ENCODE measurements at regions of chr10 and their contacts with region 1.

Region 1: DNA sequence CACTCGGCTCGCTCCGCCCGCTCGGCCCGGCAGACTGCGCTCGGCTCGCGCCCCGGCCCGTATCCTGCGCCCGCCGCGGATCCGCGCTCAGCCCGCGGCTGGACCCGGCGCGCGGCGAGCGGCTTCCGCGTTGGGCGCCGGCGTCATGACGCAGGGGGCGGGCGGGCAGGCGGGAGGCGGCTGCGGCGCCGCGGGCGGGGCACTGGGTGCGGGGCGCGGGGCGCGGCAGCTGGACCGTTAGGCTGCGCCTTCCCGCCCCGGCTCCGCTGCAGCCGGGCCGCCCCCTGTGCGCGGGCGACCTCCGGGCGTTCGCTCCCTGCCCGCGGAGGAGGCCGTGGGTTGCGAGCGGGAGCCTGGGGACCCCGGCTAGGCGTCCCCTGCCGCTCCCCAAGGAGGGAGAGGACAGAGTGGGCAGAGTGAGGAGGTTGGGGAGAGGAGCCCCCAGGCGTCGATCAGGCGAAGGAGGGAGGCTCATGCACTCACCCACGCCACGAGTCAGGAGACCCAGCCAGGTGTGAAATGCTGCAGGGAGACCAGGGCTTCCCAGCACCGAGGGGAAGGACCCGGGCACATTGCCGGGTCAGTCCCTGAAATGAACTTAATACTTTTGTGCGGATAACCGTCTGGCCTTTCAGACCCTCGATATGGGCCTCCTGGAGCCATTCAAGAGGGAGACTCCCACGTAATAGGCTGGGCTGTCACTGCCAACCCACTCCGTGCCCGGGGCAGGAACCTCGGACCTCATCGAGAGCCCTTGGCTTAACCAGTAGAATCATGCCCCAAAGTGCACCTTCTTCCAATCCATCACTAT is at the start of gene PIP4K2A:
- DNase-seq: peak in 1 of 2 donors; percentile 86
- H3K4me3 ChIP-seq: peak within 1 kb of the TSS; percentile 89 to 96
- H3K27ac ChIP-seq: peak within 1 kb of the TSS; percentile 90 to 92
- H3K4me1 ChIP-seq: peaks cover 0 to 14% of the 10 kb centered on the region in 2 donors
- H3K27me3 ChIP-seq: no peaks in the 10 kb centered on the region
- CTCF ChIP-seq: no peak
- total RNA-seq, gene PIP4K2A: 34.9 TPM

Region 2: DNA sequence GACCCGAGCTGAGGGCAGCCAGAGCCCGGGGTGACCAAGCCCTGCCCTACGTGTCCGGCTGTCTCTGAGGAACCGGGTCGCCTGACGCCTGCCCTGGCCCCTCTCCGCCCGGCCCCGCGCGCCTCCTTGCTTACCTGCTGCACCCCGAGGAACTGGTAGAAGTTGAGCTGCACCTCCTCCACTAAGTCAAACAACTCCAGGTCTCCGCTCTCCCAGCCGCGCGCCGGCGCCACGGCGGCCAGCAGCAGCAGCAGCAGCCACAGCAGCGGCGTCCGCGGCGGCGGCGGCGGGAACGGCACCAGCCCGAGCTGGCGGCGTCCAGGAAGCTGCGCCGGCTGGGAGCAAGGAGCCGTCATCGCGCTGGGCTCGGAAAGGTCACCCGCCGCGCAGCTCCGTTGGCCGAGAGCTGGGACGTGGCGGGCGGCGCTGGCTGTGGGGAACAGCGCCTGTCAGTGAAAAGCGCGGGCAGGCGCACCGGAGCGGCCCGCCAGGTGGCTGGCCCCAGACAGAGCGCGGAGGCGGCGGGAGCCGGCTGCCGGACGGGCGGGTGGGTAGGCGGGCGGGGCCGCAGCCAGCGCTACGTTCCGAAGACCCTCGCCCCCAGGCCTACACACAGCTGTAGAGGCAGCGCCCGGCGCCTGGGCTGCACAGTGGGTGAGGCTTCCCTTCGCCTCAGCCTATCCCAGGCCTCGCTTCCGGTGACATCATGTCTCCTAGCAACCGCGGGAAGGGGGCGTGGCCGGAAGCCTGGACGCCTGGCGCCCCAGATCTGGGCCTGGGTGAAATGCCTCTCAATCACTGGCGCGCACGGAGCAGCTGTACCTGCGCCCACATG is 711.4 kb before region 1 on chr10 and contains the start of gene DNAJC1:
- intact Hi-C with region 1: loop called (anchors 5 kb)
- DNase-seq: peak; percentile 93 to 99
- H3K4me3 ChIP-seq: peak within 1 kb of the TSS; percentile 74 to 81
- H3K27ac ChIP-seq: peak within 1 kb of the TSS; percentile 96
- H3K4me1 ChIP-seq: peaks cover 0 to 6% of the 10 kb centered on the region in 2 donors
- H3K27me3 ChIP-seq: no peaks in the 10 kb centered on the region
- CTCF ChIP-seq: peak in 2 of 3 experiments; percentile 13 to 15
- total RNA-seq, gene DNAJC1: 26.1 TPM

Region 3: GRCh38 chr10:22163019-22163418 is 551.7 kb before region 1 on chr10:
- intact Hi-C with region 1: no loop called
- DNase-seq: no peak
- H3K4me3 ChIP-seq: no peak overlapping the region
- H3K27ac ChIP-seq: no peak overlapping the region
- H3K4me1 ChIP-seq: no peaks in the 10 kb centered on the region
- H3K27me3 ChIP-seq: no peaks in the 10 kb centered on the region
- CTCF ChIP-seq: no peak

Region 4: DNA sequence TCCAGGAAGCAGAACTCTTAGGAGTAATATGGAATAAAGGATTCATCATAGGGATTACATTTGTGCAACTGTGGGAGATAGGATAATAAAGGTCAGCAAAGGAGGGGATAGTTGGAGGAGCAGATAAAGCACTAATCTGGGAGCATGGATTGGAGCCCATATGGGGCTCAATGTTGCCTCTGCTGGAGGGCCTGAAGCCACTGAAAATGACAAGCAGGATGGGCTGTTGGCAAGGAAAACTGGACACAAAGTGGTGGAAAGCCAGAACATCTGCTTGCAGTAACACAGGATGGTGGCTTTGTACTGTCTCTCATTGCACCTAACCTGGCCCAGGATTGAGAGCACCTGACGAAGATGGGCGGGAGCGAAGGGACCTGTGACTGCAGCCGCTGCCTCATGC is 413.5 kb before region 1 on chr10:
- intact Hi-C with region 1: no loop called
- DNase-seq: no peak
- H3K4me3 ChIP-seq: no peak overlapping the region
- H3K27ac ChIP-seq: no peak overlapping the region
- H3K4me1 ChIP-seq: no peaks in the 10 kb centered on the region
- H3K27me3 ChIP-seq: no peaks in the 10 kb centered on the region
- CTCF ChIP-seq: no peak

Region 5: DNA sequence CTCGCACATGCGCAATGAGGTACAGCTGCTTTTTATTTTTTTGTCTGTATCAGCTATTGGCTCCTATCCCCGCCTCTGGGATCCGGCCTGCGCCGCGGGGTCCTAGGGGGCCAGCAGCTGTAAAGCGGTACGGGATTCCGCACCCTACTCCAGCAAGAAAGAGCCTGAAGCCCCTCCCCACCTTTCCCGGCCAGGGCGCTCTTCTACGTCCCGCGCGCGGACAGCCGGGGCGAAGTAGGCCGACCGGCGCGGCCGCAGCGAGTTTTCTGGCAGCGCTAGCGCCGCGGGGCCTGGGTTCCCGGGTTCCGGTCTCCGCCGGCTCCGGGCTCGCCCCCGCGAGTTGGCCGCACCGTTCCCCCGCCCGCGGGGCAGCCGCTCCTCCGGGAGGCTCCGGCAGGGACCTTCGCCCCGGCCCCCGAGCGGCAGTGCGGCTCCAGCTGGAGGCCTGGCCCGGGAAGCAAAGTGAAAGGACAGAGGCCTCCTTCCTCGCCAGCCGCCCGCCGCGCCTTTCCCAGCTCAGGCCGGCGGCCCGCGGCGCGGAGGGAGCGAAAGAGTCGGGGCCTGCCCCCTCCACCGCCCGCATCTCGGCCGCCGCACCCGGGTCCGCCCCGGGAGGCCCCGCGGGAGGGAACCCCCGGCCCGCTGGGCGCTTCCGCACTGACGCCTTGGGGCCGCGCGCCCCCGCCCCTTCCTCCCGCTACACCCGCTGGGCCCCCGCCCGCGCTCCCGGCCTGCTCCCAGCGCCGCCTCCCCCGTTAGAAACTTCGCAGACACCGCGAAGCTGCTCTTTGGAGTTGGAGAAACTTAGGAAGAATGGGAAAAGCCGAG is 374.1 kb before region 1 on chr10:
- intact Hi-C with region 1: loop called (anchors 5 kb)
- DNase-seq: peak in 1 of 2 donors; percentile 84
- H3K4me3 ChIP-seq: peak overlapping the region; percentile 85 to 99
- H3K27ac ChIP-seq: peak overlapping the region; percentile 94 to 99
- H3K4me1 ChIP-seq: peaks cover 3 to 21% of the 10 kb centered on the region in 2 donors
- H3K27me3 ChIP-seq: peaks cover 62% of the 10 kb centered on the region
- CTCF ChIP-seq: no peak

Region 6: GRCh38 chr10:22620140-22620857 is 94.4 kb before region 1 on chr10:
- intact Hi-C with region 1: loop called (anchors 2 kb)
- DNase-seq: peak in 1 of 2 donors; percentile 92
- H3K4me3 ChIP-seq: no peak overlapping the region
- H3K27ac ChIP-seq: peak overlapping the region; percentile 47 to 64
- H3K4me1 ChIP-seq: peaks cover 5 to 43% of the 10 kb centered on the region in 2 donors
- H3K27me3 ChIP-seq: no peaks in the 10 kb centered on the region
- CTCF ChIP-seq: no peak

Region 7: GRCh38 chr10:22849077-22849805 is 134.6 kb after region 1 on chr10:
- intact Hi-C with region 1: loop called (anchors 2 kb)
- DNase-seq: peak; percentile 70 to 93
- H3K4me3 ChIP-seq: peak overlapping the region; percentile 25 to 38
- H3K27ac ChIP-seq: peak overlapping the region; percentile 87 to 96
- H3K4me1 ChIP-seq: peaks cover 3 to 34% of the 10 kb centered on the region in 2 donors
- H3K27me3 ChIP-seq: no peaks in the 10 kb centered on the region
- CTCF ChIP-seq: no peak

Region 8: DNA sequence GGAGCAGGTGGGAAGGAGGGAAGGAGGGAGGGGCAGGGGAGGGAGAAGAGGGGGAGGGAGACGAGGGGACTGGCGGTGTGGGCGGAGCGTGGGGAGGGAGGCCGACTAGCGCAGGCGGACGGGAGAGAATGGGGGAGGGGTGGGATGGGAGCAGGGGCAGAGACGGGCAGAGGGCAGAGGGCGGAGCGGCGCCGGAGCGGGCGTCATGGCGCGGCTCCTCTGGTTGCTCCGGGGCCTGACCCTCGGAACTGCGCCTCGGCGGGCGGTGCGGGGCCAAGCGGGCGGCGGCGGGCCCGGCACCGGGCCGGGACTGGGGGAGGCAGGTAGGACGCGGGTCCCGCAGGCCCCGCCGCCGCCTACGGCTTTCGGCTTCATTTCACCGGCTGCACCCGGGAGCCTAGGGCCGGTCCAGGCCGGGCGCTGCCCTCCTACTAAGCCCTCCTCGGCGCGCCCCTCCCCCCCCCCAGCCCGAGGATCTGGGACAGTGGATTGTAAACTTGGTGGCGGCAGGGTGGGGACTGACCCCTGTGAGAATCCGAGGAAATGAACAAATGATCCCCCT is 380.8 kb after region 1 on chr10 and contains the start of gene MSRB2:
- intact Hi-C with region 1: loop called (anchors 5 kb)
- DNase-seq: peak; percentile 60 to 94
- H3K4me3 ChIP-seq: peak within 1 kb of the TSS; percentile 86 to 90
- H3K27ac ChIP-seq: peak within 1 kb of the TSS; percentile 93 to 94
- H3K4me1 ChIP-seq: peaks cover 0 to 11% of the 10 kb centered on the region in 2 donors
- H3K27me3 ChIP-seq: no peaks in the 10 kb centered on the region
- CTCF ChIP-seq: no peak
- total RNA-seq, gene MSRB2: 38.0 TPM

Measured in ascending aorta (tissue), 2 donors.